ENCODE measurements at regions of chr1 and their contacts with region 1.

Region 1: DNA sequence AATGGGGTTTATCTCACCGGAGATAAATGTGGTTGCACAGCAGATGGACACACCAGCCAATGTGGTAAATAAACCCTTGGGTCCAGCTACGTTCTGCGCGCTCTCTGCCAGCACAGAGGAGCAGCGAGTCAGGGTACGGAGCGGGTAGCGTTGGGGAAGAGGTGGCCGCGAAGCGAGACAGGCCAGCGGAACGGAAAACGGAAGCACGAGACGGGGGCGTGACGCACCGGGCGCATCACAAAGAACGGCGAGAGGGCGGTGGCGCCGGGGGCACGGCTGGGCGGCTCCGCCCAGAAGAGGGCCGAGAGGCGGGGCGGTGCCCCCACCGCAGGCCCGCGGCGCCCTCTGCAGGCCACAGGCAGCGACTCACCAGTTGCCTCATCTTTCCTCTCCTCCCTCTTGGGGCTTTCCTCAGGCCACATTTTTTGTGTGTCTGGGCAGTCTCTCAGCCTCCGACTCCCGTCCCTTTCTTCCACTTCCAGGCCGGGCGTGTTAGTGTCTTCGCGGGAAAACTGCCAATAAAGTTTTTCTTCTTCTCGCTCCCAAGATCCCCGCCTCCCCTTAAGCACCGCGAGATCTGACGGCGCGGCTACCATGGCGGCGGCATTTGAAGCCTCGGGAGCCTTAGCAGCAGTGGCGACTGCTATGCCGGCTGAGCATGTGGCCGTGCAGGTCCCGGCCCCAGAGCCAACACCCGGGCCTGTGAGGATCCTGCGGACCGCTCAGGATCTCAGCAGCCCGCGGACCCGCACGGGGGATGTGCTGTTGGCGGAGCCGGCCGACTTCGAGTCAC is at the start of gene DDX20:
- DNase-seq: peak; percentile 96
- H3K4me3 Mint-ChIP-seq: peak within 1 kb of the TSS; percentile 84
- H3K27ac Mint-ChIP-seq: peak within 1 kb of the TSS; percentile 97
- H3K4me1 Mint-ChIP-seq: peaks cover 35% of the 10 kb centered on the region
- H3K27me3 Mint-ChIP-seq: no peaks in the 10 kb centered on the region
- total RNA-seq, gene DDX20: 14.2 to 15.9 TPM

Region 2: GRCh38 chr1:110674337-110675059 is 1081.0 kb before region 1 on chr1 and contains the start of gene KCNA3:
- CTCF ChIA-PET with region 1: no interaction called
- POLR2A ChIA-PET with region 1: no interaction called
- intact Hi-C with region 1: loop called (anchors 1 kb)
- DNase-seq: peak; percentile 72
- H3K4me3 Mint-ChIP-seq: peak within 1 kb of the TSS; percentile 95
- H3K27ac Mint-ChIP-seq: peak within 1 kb of the TSS; percentile 97
- H3K4me1 Mint-ChIP-seq: peaks cover 29% of the 10 kb centered on the region
- H3K27me3 Mint-ChIP-seq: no peaks in the 10 kb centered on the region
- total RNA-seq, gene KCNA3: 25.2 to 25.6 TPM

Region 3: DNA sequence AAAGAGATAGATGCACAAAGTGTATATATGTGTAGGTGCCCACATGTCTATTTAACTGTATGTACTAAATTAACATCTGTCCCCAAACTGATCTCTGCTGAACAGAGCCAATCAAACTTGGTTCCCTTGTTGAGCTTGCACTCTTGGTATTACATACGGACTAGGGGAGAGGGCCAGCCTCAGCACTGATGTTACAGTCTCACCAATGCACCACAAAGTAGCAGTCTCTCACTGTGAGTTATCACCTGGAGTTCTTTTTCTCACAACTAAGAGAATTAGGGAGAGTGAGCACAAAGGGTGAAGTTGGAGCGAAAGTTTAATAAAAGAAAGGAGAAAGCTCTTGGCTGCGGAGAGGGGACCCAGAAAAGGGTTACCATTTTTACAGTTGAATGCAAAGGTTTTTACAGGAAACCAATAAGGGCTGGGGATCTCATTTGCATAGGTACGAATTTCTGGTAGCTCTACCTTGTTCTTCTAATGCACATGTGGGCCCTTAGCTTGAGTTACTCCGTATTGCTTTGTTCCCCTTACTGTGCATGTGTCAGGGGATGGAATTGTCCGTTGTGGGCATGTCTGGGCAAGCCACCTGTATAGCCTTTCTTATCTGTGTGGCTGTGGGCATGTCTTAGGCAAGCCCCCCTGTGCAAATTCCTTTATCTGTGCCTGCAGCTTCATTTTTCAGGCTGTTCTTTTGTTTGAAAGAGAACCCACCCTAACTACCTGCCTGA is 541.3 kb before region 1 on chr1:
- CTCF ChIA-PET with region 1: no interaction called
- POLR2A ChIA-PET with region 1: no interaction called
- intact Hi-C with region 1: loop called (anchors 2 kb)
- DNase-seq: peak; percentile 45
- H3K4me3 Mint-ChIP-seq: peak overlapping the region; percentile 66
- H3K27ac Mint-ChIP-seq: peak overlapping the region; percentile 95
- H3K4me1 Mint-ChIP-seq: peaks cover 72% of the 10 kb centered on the region
- H3K27me3 Mint-ChIP-seq: peaks cover 3% of the 10 kb centered on the region

Region 4: DNA sequence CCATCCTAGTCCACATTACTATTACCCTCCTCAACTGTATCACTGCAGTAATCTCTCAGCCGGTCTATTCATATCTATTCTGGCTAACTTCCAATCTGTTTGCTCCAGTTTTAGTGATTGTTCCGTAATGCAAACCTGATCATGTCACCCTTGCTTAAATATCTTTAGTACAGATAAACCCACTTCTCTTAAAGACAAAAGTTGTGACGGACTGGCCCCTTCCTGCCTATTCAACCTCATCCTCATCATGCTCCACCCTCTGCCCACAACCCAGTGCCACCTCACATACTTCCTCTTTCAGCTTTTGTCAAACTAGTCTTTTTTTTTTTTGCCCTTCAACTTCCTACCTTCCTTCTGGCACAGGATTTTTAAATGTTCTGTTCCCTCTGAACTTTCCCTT is 284.5 kb before region 1 on chr1:
- CTCF ChIA-PET with region 1: interaction called, 14 read pairs
- POLR2A ChIA-PET with region 1: no interaction called
- intact Hi-C with region 1: no loop called
- DNase-seq: peak; percentile 85
- H3K4me3 Mint-ChIP-seq: no peak overlapping the region
- H3K27ac Mint-ChIP-seq: no peak overlapping the region
- H3K4me1 Mint-ChIP-seq: peaks cover 31% of the 10 kb centered on the region
- H3K27me3 Mint-ChIP-seq: no peaks in the 10 kb centered on the region

Region 5: DNA sequence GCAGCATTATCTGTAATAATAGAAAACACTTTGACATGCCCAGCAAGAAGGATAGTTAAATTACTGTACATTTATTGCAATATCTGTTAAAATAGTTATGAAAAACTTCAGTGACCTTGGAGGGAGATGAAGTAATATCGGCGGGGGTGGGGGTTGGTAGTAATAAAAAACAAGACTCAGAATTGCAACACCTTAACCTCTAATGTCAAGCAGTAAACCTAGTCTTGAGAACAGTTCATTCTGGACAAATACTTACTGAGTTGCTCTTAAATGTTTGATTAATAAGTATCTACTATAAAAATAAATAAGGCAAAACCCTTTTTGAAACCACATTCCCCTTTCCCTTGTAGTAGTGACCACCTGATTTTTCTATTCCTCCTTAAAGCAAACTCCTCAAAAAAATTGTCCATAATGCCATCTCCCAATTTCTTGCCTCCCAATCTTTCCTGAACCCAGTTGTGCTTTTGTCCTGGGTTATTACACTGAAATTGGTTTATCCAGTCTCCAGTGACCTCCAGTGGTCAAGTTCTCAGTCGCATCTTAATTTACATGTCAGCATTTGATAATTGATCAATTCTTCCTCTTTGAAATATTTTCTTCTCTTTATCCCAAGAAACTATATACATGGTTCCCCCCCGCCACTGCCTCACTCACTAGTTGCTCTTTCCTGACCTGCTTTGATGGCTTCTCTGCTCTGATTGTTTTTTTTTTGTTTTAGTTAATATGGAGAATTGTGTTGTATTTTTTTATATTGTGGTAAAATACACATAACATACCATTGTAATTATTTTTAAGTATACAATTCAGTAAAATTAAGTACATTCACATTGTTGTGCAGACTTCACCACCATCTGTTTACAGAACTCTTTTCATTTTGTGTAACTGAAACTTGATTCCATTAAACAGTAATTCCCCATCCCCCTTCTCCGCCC is 99.2 kb before region 1 on chr1:
- CTCF ChIA-PET with region 1: no interaction called
- POLR2A ChIA-PET with region 1: interaction called, 4 read pairs
- intact Hi-C with region 1: loop called (anchors 5 kb)
- DNase-seq: no peak
- H3K4me3 Mint-ChIP-seq: no peak overlapping the region
- H3K27ac Mint-ChIP-seq: no peak overlapping the region
- H3K4me1 Mint-ChIP-seq: peaks cover 48% of the 10 kb centered on the region
- H3K27me3 Mint-ChIP-seq: no peaks in the 10 kb centered on the region

Region 6: DNA sequence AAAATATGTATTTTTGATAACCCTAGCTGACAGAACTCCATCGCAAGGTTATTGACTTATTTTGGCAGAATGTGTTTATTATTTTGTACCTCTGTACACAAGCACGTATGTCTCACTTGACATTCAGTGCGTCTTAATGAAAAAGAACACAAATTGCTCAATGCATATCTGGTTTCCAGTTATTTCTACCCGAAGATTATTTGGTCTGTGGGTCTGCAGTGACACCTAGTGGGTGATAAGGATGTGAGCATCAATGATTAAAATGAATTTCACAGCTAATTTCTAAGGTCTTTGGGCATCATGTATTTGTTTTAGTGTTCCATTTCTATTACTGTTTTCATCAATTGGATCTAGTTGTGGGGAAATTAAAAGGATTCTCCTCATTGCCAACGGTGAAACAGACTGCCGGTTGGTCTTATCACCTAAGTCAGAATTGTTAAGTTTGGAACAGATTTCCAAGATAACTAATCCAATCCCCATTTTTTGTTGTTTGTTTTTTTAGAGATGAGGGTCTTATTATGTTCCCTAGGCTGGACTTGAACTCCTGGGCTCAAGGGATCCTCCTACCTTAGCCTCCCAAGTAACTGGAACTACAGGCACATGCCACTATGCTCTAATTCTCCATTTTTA is 14.1 kb after region 1 on chr1:
- CTCF ChIA-PET with region 1: interaction called, 24 read pairs
- POLR2A ChIA-PET with region 1: no interaction called
- intact Hi-C with region 1: no loop called
- DNase-seq: peak; percentile 44
- H3K4me3 Mint-ChIP-seq: no peak overlapping the region
- H3K27ac Mint-ChIP-seq: no peak overlapping the region
- H3K4me1 Mint-ChIP-seq: peaks cover 3% of the 10 kb centered on the region
- H3K27me3 Mint-ChIP-seq: no peaks in the 10 kb centered on the region

Region 7: GRCh38 chr1:112099979-112100378 is 344.5 kb after region 1 on chr1:
- CTCF ChIA-PET with region 1: no interaction called
- POLR2A ChIA-PET with region 1: no interaction called
- intact Hi-C with region 1: no loop called
- DNase-seq: no peak
- H3K4me3 Mint-ChIP-seq: no peak overlapping the region
- H3K27ac Mint-ChIP-seq: no peak overlapping the region
- H3K4me1 Mint-ChIP-seq: no peaks in the 10 kb centered on the region
- H3K27me3 Mint-ChIP-seq: peaks cover 12% of the 10 kb centered on the region